ENCODE measurements at regions of chr13 and their contacts with region 1.

Region 1: GRCh38 chr13:23960566-23961156 is 63.4 kb upstream of the C1QTNF9B start:
- DNase-seq: no peak
- H3K4me3 Mint-ChIP-seq: no peak overlapping the region
- H3K27ac Mint-ChIP-seq: no peak overlapping the region
- H3K4me1 Mint-ChIP-seq: peaks cover 33% of the 10 kb centered on the region
- H3K27me3 Mint-ChIP-seq: peaks cover 11% of the 10 kb centered on the region

Region 2: DNA sequence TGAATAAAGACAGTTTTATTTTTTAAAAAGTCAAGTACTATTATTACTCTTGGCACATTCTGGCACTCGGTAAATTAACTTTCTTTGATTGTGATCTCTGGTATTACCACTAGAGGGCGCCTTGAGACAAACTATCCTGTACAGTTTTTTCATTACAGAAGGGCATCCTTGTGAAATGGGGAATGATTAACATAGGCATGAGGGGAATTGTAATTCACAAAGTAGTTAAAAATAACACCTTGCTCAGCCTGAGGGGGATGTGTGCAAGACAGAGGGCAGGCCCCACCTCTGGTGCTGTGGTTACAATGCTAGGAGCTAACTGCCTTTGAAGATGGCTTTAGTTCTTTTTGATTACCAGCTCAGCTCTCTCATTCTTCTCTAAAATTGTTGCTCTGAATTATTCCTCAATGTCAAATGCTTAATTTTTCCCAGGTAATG is 39.2 kb before region 1 on chr13:
- CTCF ChIA-PET with region 1: interaction called, 41 read pairs
- DNase-seq: no peak
- H3K4me3 Mint-ChIP-seq: no peak overlapping the region
- H3K27ac Mint-ChIP-seq: no peak overlapping the region
- H3K4me1 Mint-ChIP-seq: no peaks in the 10 kb centered on the region
- H3K27me3 Mint-ChIP-seq: peaks cover 37% of the 10 kb centered on the region

Region 3: DNA sequence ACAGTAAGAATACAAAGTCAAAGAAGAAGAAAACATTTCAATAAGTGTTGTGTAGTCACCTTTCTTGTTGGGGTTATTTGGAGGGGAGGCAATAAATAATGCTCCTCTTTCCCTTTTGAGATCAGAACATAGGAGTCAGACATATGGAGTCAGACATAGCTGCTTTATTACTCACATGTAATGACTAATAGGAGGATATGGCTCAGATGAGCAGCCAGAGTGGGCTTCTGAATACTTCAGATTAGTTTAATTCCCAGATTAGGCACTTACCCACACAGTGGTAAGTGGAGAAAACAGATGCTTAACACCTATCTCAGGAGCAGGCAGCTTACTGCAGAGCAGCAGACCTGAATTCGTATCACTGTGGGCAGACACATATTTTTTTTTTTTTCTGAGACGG is 31.7 kb before region 1 on chr13:
- CTCF ChIA-PET with region 1: interaction called, 41 read pairs
- DNase-seq: no peak
- H3K4me3 Mint-ChIP-seq: no peak overlapping the region
- H3K27ac Mint-ChIP-seq: no peak overlapping the region
- H3K4me1 Mint-ChIP-seq: no peaks in the 10 kb centered on the region
- H3K27me3 Mint-ChIP-seq: peaks cover 42% of the 10 kb centered on the region